IMR-90 (cell line): ENCODE measurements at regions of chr9 and their contacts with region 1.

Region 1: GRCh38 chr9:92048924-92049625 is 66.1 kb downstream of the SPTLC1 start:
- DNase-seq: peak; percentile 65
- ATAC-seq: no peak; the same call in 1 of the 2 replicates
- H3K4me3 ChIP-seq: no peak overlapping the region
- H3K27ac ChIP-seq: peak overlapping the region; percentile 2; the same call in 1 of the 2 replicates
- H3K4me1 ChIP-seq: peaks cover 10% of the 10 kb centered on the region
- H3K27me3 ChIP-seq: no peaks in the 10 kb centered on the region
- CTCF ChIP-seq: no peak
- POLR2A ChIP-seq: no peak
- RAD21 ChIP-seq: no peak

Region 2: DNA sequence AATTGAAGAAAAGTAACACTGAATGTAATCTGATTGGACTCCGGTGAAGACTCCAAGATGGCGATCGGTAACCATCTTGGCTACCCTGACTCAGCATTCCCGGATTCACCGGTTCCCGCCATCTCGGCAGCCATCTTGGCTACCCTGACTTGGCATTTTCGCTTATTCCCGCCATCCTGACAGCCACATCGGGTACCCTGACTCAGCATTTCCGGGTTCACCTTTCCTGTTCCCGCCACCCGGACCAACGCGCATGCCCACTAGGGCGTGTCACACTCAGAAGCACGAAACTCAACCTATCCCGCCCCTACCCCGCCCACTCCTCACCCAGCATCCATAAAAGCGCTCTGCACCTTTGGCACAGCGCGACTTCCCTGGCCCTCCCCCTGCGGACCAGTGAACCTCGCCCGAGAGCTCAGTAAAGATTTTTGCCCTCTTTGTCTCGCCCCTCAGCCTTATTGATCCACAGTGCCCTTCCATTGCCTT is 49.0 kb after region 1 on chr9:
- CTCF ChIA-PET with region 1: no interaction called
- POLR2A ChIA-PET with region 1: no interaction called
- dilution Hi-C with region 1: no loop called
- in situ Hi-C with region 1: no loop called
- intact Hi-C with region 1: loop called (anchors 5 kb)
- DNase-seq: peak; percentile 30
- ATAC-seq: no peak
- H3K4me3 ChIP-seq: no peak overlapping the region
- H3K27ac ChIP-seq: peak overlapping the region; percentile 38; the same call in 1 of the 2 replicates
- H3K4me1 ChIP-seq: peaks cover 8% of the 10 kb centered on the region
- H3K27me3 ChIP-seq: no peaks in the 10 kb centered on the region
- CTCF ChIP-seq: no peak
- POLR2A ChIP-seq: no peak
- RAD21 ChIP-seq: no peak